ENCODE measurements at regions of chr3 and their contacts with region 1.

Region 1: GRCh38 chr3:128322066-128323022 is 144.3 kb downstream of the DNAJB8 start:
- DNase-seq: no peak
- H3K4me3 ChIP-seq: no peak overlapping the region
- CTCF ChIP-seq: peak; percentile 67

Region 2: DNA sequence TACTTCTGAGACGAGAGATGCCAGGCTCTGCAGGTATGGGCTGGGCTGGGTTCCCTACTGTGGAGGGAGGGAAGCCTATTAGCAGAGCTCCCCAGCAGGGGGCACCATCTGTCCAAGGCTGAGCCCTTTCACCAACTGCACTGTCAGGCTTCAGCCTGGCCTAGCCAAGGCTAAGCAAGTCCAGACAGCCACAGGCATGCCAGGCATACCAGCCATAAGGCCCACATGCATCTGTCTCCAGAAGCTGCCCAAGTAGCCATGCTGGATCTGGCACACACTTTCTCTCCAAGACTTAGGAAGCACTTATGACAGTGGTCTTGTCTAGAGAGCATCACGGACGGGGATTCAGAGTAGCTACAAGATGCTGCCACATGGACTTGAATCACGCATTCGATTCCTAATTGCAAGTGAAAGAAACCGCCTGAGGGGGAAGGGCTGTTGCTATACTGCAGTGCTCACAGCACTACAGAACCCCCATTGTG is 227.1 kb before region 1 on chr3:
- CTCF ChIA-PET with region 1: interaction called, 18 read pairs
- POLR2A ChIA-PET with region 1: no interaction called
- DNase-seq: peak; percentile 82
- H3K4me3 ChIP-seq: no peak overlapping the region
- CTCF ChIP-seq: peak; percentile 90

Region 3: DNA sequence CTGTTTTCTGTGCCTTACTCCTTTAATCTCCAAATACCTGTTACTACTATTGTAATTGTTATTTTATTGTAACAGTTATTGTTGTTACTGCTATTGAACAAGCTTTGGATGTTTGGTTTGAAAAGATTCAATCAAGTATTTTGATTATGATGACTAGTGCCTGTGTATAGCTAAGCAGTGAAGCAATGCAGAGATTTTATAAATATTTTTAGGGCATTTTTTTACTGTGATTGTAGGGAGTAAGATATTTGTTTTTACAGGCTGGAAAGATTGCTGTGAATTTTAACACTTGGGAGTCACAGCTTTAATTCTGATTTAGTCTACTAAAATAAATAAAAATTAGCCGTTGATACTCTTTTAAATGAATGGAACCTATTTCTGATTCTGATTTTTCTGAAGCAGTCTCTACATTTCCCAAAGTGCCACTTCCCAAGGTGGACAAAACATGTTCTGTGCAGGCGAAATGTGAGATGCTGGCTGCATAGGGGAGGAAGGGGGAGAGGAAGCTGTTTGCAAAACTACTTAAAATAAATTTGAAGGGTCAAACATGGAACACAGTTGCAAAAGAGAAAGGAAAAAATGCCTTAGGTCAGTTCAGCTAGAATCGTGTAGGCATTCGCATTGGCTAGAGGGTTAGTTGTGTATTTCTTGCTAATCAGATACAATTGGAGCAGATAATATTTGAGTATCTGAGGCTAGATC is 143.4 kb before region 1 on chr3:
- CTCF ChIA-PET with region 1: interaction called, 20 read pairs
- POLR2A ChIA-PET with region 1: no interaction called
- DNase-seq: no peak
- H3K4me3 ChIP-seq: no peak overlapping the region
- CTCF ChIP-seq: no peak

Region 4: GRCh38 chr3:128226795-128227395 is 95.4 kb before region 1 on chr3:
- CTCF ChIA-PET with region 1: interaction called, 11 read pairs
- POLR2A ChIA-PET with region 1: no interaction called
- DNase-seq: no peak
- H3K4me3 ChIP-seq: no peak overlapping the region
- CTCF ChIP-seq: peak; percentile 90

Region 5: GRCh38 chr3:128307029-128307633 is 15.2 kb before region 1 on chr3:
- CTCF ChIA-PET with region 1: interaction called, 28 read pairs
- POLR2A ChIA-PET with region 1: no interaction called
- DNase-seq: no peak
- H3K4me3 ChIP-seq: no peak overlapping the region
- CTCF ChIP-seq: no peak

Region 6: GRCh38 chr3:128334166-128334565 is 11.8 kb after region 1 on chr3:
- CTCF ChIA-PET with region 1: interaction called, 10 read pairs
- POLR2A ChIA-PET with region 1: no interaction called
- DNase-seq: no peak
- H3K4me3 ChIP-seq: no peak overlapping the region
- CTCF ChIP-seq: no peak